ENCODE measurements at regions of chr2 and their contacts with region 1.

Region 1: DNA sequence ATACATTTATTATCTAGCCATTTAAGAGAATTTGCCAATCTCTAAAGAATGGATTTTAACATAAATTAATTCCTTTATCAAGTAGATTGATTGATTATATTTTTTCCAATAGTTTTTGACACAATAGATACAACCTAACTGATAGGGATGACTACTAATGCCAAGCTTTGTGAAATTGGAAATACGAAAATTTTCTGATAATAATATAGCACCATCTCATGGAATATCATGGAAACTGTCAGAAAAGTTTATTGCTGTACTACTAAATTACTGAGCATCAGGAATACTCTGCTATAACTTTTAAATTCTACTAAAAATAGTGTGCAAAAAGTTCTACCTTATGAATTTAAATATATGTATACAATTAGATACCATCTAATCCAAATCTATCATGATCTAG is 101.8 kb upstream of the MAP2 start:
- DNase-seq: no peak
- ATAC-seq: no peak
- H3K4me3 ChIP-seq: no peak overlapping the region
- H3K27ac ChIP-seq: no peak overlapping the region
- H3K4me1 ChIP-seq: no peaks in the 10 kb centered on the region
- H3K27me3 ChIP-seq: peaks cover 0 to 5% (median 0%) of the 10 kb centered on the region in 7 donors
- CTCF ChIP-seq: peak in 1 of 9 donors; percentile 12

Region 2: GRCh38 chr2:208407667-208408066 is 914.4 kb before region 1 on chr2:
- intact Hi-C with region 1: loop called in 1 of 10 experiments (anchors 10 kb)
- DNase-seq: no peak
- ATAC-seq: no peak
- H3K4me3 ChIP-seq: no peak overlapping the region
- H3K27ac ChIP-seq: no peak overlapping the region
- H3K4me1 ChIP-seq: peaks cover 0 to 12% (median 7%) of the 10 kb centered on the region in 9 donors
- H3K27me3 ChIP-seq: peaks cover 0 to 86% (median 64%) of the 10 kb centered on the region in 7 donors
- CTCF ChIP-seq: peak in 5 of 9 donors; percentile 14 to 42 (median 31)

Region 3: GRCh38 chr2:209788932-209789331 is 466.9 kb after region 1 on chr2:
- intact Hi-C with region 1: no loop called
- DNase-seq: no peak
- ATAC-seq: no peak
- H3K4me3 ChIP-seq: no peak overlapping the region
- H3K27ac ChIP-seq: no peak overlapping the region
- H3K4me1 ChIP-seq: no peaks in the 10 kb centered on the region
- H3K27me3 ChIP-seq: no peaks in the 10 kb centered on the region
- CTCF ChIP-seq: no peak

Region 4: GRCh38 chr2:210203157-210203947 is 881.3 kb after region 1 on chr2:
- intact Hi-C with region 1: loop called in 2 of 10 experiments (anchors 10 kb)
- DNase-seq: no peak
- ATAC-seq: no peak
- H3K4me3 ChIP-seq: no peak overlapping the region
- H3K27ac ChIP-seq: no peak overlapping the region
- H3K4me1 ChIP-seq: no peaks in the 10 kb centered on the region
- H3K27me3 ChIP-seq: peaks cover 0 to 3% (median 0%) of the 10 kb centered on the region in 7 donors
- CTCF ChIP-seq: no peak